GM13976 (cell line): ENCODE measurements at regions of chr2 and their contacts with region 1.

Region 1: DNA sequence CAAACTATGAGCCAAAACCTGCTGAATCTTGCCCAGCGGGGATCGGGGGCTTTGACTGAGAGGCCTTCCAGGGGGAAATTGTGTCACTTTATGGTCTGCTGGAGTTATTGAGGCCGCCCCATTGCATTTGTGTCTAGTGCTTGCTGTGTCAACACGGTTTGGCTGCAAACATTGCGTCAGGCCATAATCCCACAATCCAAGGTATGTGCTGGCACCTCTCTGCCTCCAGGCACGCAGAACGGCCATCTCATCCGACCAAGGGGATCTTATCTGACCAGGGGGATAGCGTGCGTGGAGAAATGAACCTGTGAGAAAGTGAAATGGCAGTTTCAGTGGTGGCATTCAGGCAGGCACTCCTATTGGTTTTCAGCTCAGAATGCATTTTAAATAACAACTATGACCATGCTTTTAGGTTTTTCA is 18.1 kb upstream of the LYPD6B start:
- DNase-seq: no peak
- CTCF ChIP-seq: no peak

Region 2: DNA sequence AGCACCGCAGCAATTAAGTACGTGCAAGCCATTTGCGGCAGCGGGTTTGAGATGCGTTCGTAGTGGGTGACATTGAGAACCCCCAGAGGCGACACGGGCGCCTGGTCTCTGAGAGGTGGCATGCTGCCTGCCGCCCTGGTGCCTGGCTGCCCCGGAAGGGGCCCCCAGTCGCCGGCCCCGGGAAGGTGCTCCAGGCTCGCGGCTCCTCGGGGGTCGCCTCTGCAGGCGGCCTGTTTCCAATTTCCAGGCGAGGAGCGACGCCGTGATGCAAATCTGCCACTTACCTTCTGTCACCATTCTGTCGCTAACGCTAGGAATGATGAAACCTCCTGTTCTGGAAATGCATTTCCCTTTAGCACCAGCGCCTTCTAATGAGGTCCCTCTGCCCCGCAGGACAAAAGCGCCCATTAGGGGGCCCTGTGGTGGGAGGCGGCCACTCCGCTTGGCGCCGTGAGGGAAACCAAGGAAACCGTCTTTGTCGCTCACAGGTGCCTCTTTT is 132.4 kb before region 1 on chr2:
- in situ Hi-C with region 1: no loop called
- DNase-seq: peak; percentile 43
- CTCF ChIP-seq: no peak

Region 3: GRCh38 chr2:149313512-149313972 is 293.1 kb after region 1 on chr2:
- in situ Hi-C with region 1: loop called (anchors 10 kb)
- DNase-seq: peak; percentile 55
- CTCF ChIP-seq: peak; percentile 58

Region 4: GRCh38 chr2:149466635-149467034 is 446.2 kb after region 1 on chr2:
- in situ Hi-C with region 1: no loop called
- DNase-seq: no peak
- CTCF ChIP-seq: no peak

Region 5: DNA sequence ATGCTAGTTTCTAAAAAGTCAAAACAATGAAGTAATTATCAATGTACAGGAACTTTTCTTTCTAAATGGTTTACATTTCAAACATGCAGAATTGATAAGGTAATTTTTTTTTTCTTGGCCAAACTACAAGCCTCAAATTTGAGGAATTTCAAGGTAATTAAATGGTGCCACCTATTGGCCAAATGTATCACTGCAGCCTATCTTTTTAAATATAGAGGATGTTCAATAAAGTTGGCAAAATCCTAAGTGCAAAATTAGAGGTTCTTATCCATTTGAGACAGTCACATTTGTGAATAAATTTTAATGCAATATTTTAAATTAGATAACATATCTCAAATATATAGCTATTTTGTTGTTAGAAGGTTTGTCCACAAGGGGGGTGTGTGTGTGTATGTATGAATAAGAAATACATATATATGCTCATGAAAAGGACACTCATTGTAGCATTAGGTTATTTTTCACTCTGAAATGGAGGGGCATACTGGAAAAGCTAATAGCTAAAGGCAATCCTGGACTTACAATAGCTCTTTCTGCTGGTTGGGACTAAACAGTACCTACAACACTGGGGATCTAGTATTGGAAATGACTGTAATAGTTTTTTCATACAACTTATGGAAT is 541.0 kb after region 1 on chr2:
- in situ Hi-C with region 1: loop called (anchors 10 kb)
- DNase-seq: peak; percentile 42
- CTCF ChIP-seq: peak; percentile 72